ENCODE measurements at regions of chr3 and their contacts with region 1.

Region 1: GRCh38 chr3:114290911-114291901 is 2.6 kb upstream of the TIGIT start:
- DNase-seq: peak; percentile 83 to 97 (median 89)
- H3K4me3 ChIP-seq: peak overlapping the region; percentile 49
- H3K4me3 Mint-ChIP-seq: peak overlapping the region; percentile 82 to 97 (median 88)
- H3K27ac ChIP-seq: peak overlapping the region; percentile 81
- H3K27ac Mint-ChIP-seq: peak overlapping the region; percentile 91 to 99 (median 96)
- H3K4me1 ChIP-seq: peaks cover 35% of the 10 kb centered on the region
- H3K4me1 Mint-ChIP-seq: peaks cover 56 to 76% (median 71%) of the 10 kb centered on the region in 3 donors
- H3K27me3 ChIP-seq: no peaks in the 10 kb centered on the region
- H3K27me3 Mint-ChIP-seq: no peaks in the 10 kb centered on the region

Region 2: GRCh38 chr3:114213627-114214541 is 77.3 kb before region 1 on chr3:
- CTCF ChIA-PET with region 1: interaction called, 124 read pairs
- POLR2A ChIA-PET with region 1: interaction called, 119 read pairs
- DNase-seq: peak; percentile 61 to 89 (median 80)
- H3K4me3 ChIP-seq: peak overlapping the region; percentile 61
- H3K4me3 Mint-ChIP-seq: no peak overlapping the region
- H3K27ac ChIP-seq: peak overlapping the region; percentile 90
- H3K27ac Mint-ChIP-seq: no peak overlapping the region
- H3K4me1 ChIP-seq: peaks cover 67% of the 10 kb centered on the region
- H3K4me1 Mint-ChIP-seq: peaks cover 0 to 6% (median 0%) of the 10 kb centered on the region in 3 donors
- H3K27me3 ChIP-seq: no peaks in the 10 kb centered on the region
- H3K27me3 Mint-ChIP-seq: no peaks in the 10 kb centered on the region

Region 3: DNA sequence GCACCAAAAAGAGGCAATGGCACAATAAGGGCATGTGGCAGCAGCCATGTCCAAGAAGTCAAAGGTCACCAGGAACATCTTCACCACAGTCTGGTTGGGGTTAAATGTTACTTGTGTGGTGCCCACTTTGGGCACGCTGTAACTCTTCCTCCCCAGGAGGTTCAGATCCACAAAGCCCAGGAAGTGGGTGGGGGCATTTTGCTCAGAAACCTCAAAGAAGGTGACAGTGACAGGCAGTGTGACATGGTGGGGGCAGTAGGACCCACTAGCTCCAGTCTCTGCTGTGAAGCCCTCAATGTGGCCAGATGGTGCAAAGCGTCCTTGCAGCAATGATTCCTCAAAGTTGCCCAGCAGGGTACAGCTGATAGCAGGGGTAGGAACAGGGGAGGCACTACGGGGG is 59.6 kb before region 1 on chr3:
- CTCF ChIA-PET with region 1: interaction called, 12 read pairs
- POLR2A ChIA-PET with region 1: interaction called, 6 read pairs
- DNase-seq: peak; percentile 33 to 83 (median 71)
- H3K4me3 ChIP-seq: peak overlapping the region; percentile 38
- H3K4me3 Mint-ChIP-seq: peak overlapping the region; percentile 69 to 89 (median 75)
- H3K27ac ChIP-seq: peak overlapping the region; percentile 34
- H3K27ac Mint-ChIP-seq: peak overlapping the region; percentile 91 to 99 (median 97)
- H3K4me1 ChIP-seq: peaks cover 87% of the 10 kb centered on the region
- H3K4me1 Mint-ChIP-seq: peaks cover 22 to 87% (median 36%) of the 10 kb centered on the region in 3 donors
- H3K27me3 ChIP-seq: no peaks in the 10 kb centered on the region
- H3K27me3 Mint-ChIP-seq: no peaks in the 10 kb centered on the region

Region 4: DNA sequence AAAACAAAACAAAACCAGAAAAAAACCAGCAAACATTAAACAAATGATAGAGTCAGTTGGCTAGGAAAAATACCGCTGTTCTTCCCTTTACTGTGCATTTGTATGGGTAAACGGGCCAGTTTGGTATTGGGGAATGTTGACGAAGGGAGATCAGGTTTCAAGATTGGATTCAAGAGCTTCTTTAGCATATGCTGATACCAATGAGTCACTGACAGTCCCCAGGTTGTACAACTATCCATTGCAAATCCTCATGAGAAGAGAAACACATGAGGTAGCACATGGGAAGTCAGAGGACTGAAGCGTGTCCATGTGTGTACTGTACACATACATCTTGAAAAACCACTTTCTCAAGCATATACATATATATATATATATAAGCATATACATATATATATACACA is 28.2 kb after region 1 on chr3:
- CTCF ChIA-PET with region 1: interaction called, 17 read pairs
- POLR2A ChIA-PET with region 1: interaction called, 4 read pairs
- DNase-seq: no peak
- H3K4me3 ChIP-seq: no peak overlapping the region
- H3K4me3 Mint-ChIP-seq: peak overlapping the region in 1 of 7 donors; percentile 53
- H3K27ac ChIP-seq: no peak overlapping the region
- H3K27ac Mint-ChIP-seq: peak overlapping the region in 6 of 8 donors; percentile 3 to 73 (median 42)
- H3K4me1 ChIP-seq: peaks cover 31% of the 10 kb centered on the region
- H3K4me1 Mint-ChIP-seq: peaks cover 79 to 98% (median 91%) of the 10 kb centered on the region in 3 donors
- H3K27me3 ChIP-seq: no peaks in the 10 kb centered on the region
- H3K27me3 Mint-ChIP-seq: peaks cover 0 to 2% of the 10 kb centered on the region in 2 donors

Region 5: GRCh38 chr3:114336122-114336697 is 45.0 kb after region 1 on chr3:
- CTCF ChIA-PET with region 1: interaction called, 29 read pairs
- POLR2A ChIA-PET with region 1: interaction called, 5 read pairs
- DNase-seq: no peak
- H3K4me3 ChIP-seq: no peak overlapping the region
- H3K4me3 Mint-ChIP-seq: peak overlapping the region in 3 of 7 donors; percentile 1 to 32 (median 5)
- H3K27ac ChIP-seq: no peak overlapping the region
- H3K27ac Mint-ChIP-seq: peak overlapping the region in 7 of 8 donors; percentile 1 to 93 (median 65)
- H3K4me1 ChIP-seq: peaks cover 19% of the 10 kb centered on the region
- H3K4me1 Mint-ChIP-seq: peaks cover 62 to 95% (median 92%) of the 10 kb centered on the region in 3 donors
- H3K27me3 ChIP-seq: no peaks in the 10 kb centered on the region
- H3K27me3 Mint-ChIP-seq: no peaks in the 10 kb centered on the region

Region 6: GRCh38 chr3:114418724-114419543 is 127.7 kb after region 1 on chr3:
- CTCF ChIA-PET with region 1: interaction called, 54 read pairs
- POLR2A ChIA-PET with region 1: no interaction called
- DNase-seq: peak in 2 of 5 donors; percentile 58 to 59
- H3K4me3 ChIP-seq: no peak overlapping the region
- H3K4me3 Mint-ChIP-seq: no peak overlapping the region
- H3K27ac ChIP-seq: no peak overlapping the region
- H3K27ac Mint-ChIP-seq: peak overlapping the region in 1 of 8 donors; percentile 52
- H3K4me1 ChIP-seq: peaks cover 6% of the 10 kb centered on the region
- H3K4me1 Mint-ChIP-seq: peaks cover 6 to 10% (median 9%) of the 10 kb centered on the region in 3 donors
- H3K27me3 ChIP-seq: no peaks in the 10 kb centered on the region
- H3K27me3 Mint-ChIP-seq: no peaks in the 10 kb centered on the region

Measured in CD8-positive, alpha-beta memory T cell (primary cell).